ENCODE measurements at regions of chr3 and their contacts with region 1.

Region 1: GRCh38 chr3:165254812-165255211 is 58.6 kb upstream of the SLITRK3 start:
- DNase-seq: peak; percentile 63
- H3K4me3 ChIP-seq: no peak overlapping the region
- H3K27ac ChIP-seq: no peak overlapping the region
- H3K4me1 ChIP-seq: no peaks in the 10 kb centered on the region
- H3K27me3 ChIP-seq: no peaks in the 10 kb centered on the region
- CTCF ChIP-seq: peak; percentile 45

Region 2: GRCh38 chr3:164832216-164832615 is 422.6 kb before region 1 on chr3:
- CTCF ChIA-PET with region 1: no interaction called
- POLR2A ChIA-PET with region 1: no interaction called
- intact Hi-C with region 1: no loop called
- DNase-seq: no peak
- H3K4me3 ChIP-seq: no peak overlapping the region
- H3K27ac ChIP-seq: no peak overlapping the region
- H3K4me1 ChIP-seq: no peaks in the 10 kb centered on the region
- H3K27me3 ChIP-seq: no peaks in the 10 kb centered on the region
- CTCF ChIP-seq: no peak

Region 3: GRCh38 chr3:165196577-165197480 is 58.0 kb before region 1 on chr3:
- CTCF ChIA-PET with region 1: no interaction called
- POLR2A ChIA-PET with region 1: no interaction called
- intact Hi-C with region 1: no loop called
- DNase-seq: peak; percentile 39
- H3K4me3 ChIP-seq: peak overlapping the region; percentile 66
- H3K27ac ChIP-seq: peak overlapping the region; percentile 38
- H3K4me1 ChIP-seq: no peaks in the 10 kb centered on the region
- H3K27me3 ChIP-seq: no peaks in the 10 kb centered on the region
- CTCF ChIP-seq: no peak

Region 4: GRCh38 chr3:165854696-165855095 is 599.9 kb after region 1 on chr3:
- CTCF ChIA-PET with region 1: no interaction called
- POLR2A ChIA-PET with region 1: no interaction called
- intact Hi-C with region 1: loop called (anchors 10 kb)
- DNase-seq: peak; percentile 49
- H3K4me3 ChIP-seq: no peak overlapping the region
- H3K27ac ChIP-seq: no peak overlapping the region
- H3K4me1 ChIP-seq: peaks cover 7% of the 10 kb centered on the region
- H3K27me3 ChIP-seq: no peaks in the 10 kb centered on the region
- CTCF ChIP-seq: peak; percentile 70

Measured in A673 (cell line).